Esophagus muscularis mucosa (tissue), 4 donors: ENCODE measurements at regions of chr11 and their contacts with region 1.

Region 1: GRCh38 chr11:14463623-14464022 is 36.0 kb downstream of the COPB1 start:
- DNase-seq: no peak
- H3K4me3 ChIP-seq: no peak overlapping the region
- H3K27ac ChIP-seq: no peak overlapping the region
- H3K4me1 ChIP-seq: no peaks in the 10 kb centered on the region
- H3K27me3 ChIP-seq: no peaks in the 10 kb centered on the region
- CTCF ChIP-seq: no peak
- EP300 ChIP-seq: no peak
- POLR2A ChIP-seq: no peak

Region 2: GRCh38 chr11:14499554-14500180 is 36.0 kb after region 1 on chr11 and contains the start of gene COPB1:
- intact Hi-C with region 1: loop called (anchors 5 kb)
- DNase-seq: peak; percentile 97
- H3K4me3 ChIP-seq: peak within 1 kb of the TSS; percentile 83 to 91 (median 89)
- H3K27ac ChIP-seq: peak within 1 kb of the TSS; percentile 87 to 93 (median 91)
- H3K4me1 ChIP-seq: peaks cover 17 to 44% (median 36%) of the 10 kb centered on the region in 4 donors
- H3K27me3 ChIP-seq: no peaks in the 10 kb centered on the region
- CTCF ChIP-seq: peak in 1 of 3 experiments; percentile 2
- EP300 ChIP-seq: no peak
- POLR2A ChIP-seq: no peak
- total RNA-seq, gene COPB1: 64.1 to 85.2 (median 80.5) TPM

Region 3: GRCh38 chr11:14713496-14714244 is 250.0 kb after region 1 on chr11:
- intact Hi-C with region 1: no loop called
- DNase-seq: no peak
- H3K4me3 ChIP-seq: no peak overlapping the region
- H3K27ac ChIP-seq: no peak overlapping the region
- H3K4me1 ChIP-seq: peaks cover 0 to 7% (median 0%) of the 10 kb centered on the region in 4 donors
- H3K27me3 ChIP-seq: no peaks in the 10 kb centered on the region
- CTCF ChIP-seq: no peak
- EP300 ChIP-seq: no peak
- POLR2A ChIP-seq: no peak